ENCODE measurements at regions of chr22 and their contacts with region 1.

Region 1: DNA sequence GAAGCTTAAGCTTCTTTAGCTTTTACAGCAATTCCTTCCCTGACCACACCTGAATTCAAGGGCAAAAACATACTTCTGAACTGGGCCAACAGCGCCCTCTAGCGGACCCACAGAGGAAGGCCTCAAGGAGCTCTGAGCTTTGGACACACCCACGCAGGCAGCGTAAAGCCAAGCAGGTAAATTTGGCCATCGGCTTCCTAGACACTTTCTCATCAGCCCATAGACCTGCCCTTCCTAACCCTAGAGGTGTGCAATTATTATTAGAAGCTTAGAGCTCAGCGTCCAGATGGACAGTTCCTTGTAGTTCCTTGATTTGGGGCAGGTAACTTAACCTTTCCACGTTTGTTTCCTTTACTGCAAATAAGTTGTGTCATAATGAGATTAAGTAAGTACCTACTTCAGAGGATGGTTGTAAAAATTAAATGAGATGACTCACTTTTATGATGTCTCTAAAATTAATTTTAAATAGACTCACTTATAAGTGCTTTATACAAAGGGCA is 25.7 kb upstream of the HMGXB4 start:
- DNase-seq: peak; percentile 85
- ATAC-seq: peak; percentile 95
- H3K4me3 Mint-ChIP-seq: no peak overlapping the region
- H3K27ac Mint-ChIP-seq: no peak overlapping the region
- H3K4me1 Mint-ChIP-seq: peaks cover 31% of the 10 kb centered on the region
- H3K27me3 Mint-ChIP-seq: peaks cover 21% of the 10 kb centered on the region
- CTCF ChIP-seq: peak; percentile 99

Region 2: DNA sequence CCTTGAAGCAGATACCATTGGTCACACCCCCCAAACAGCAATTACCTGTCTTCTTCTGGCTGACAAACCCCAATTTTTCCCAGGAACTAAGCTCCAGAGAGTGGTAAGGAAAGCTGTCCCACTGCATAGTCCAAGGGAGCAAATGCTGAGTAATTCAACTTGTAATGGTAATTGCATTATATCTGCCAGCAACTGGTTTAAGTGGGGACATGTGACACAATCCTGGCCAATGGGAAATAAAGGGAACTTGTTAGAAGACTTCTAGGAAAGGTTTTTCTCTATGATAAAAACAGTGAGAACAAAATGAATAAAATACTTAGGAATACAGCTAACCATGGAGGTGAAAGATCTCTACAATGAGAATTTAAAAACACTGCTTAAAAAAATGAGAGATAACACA is 175.1 kb before region 1 on chr22:
- CTCF ChIA-PET with region 1: interaction called, 12 read pairs
- POLR2A ChIA-PET with region 1: no interaction called
- DNase-seq: no peak
- ATAC-seq: no peak
- H3K4me3 Mint-ChIP-seq: no peak overlapping the region
- H3K27ac Mint-ChIP-seq: no peak overlapping the region
- H3K4me1 Mint-ChIP-seq: no peaks in the 10 kb centered on the region
- H3K27me3 Mint-ChIP-seq: no peaks in the 10 kb centered on the region
- CTCF ChIP-seq: no peak

Region 3: DNA sequence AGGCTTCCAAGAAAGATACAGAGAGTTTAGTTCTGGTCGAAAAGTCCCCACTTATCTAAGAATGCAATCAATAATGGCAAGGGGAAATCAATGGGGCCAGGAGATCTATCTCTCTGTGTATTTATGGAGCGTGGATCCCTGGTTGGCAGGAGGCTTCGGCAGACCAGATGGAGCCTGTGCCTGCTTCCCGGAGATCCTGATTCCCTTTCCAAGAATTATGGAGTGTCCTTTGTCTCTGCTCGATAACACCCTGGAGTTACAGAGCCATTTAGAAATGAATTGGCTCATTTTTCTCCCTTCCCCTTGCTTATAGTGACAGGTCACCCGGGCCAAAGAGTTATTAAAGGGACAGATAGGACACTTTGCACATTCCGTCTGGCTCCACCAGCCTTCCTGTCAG is 73.3 kb before region 1 on chr22:
- CTCF ChIA-PET with region 1: interaction called, 72 read pairs
- POLR2A ChIA-PET with region 1: no interaction called
- DNase-seq: no peak
- ATAC-seq: no peak
- H3K4me3 Mint-ChIP-seq: no peak overlapping the region
- H3K27ac Mint-ChIP-seq: no peak overlapping the region
- H3K4me1 Mint-ChIP-seq: peaks cover 16% of the 10 kb centered on the region
- H3K27me3 Mint-ChIP-seq: peaks cover 11% of the 10 kb centered on the region
- CTCF ChIP-seq: no peak

Region 4: DNA sequence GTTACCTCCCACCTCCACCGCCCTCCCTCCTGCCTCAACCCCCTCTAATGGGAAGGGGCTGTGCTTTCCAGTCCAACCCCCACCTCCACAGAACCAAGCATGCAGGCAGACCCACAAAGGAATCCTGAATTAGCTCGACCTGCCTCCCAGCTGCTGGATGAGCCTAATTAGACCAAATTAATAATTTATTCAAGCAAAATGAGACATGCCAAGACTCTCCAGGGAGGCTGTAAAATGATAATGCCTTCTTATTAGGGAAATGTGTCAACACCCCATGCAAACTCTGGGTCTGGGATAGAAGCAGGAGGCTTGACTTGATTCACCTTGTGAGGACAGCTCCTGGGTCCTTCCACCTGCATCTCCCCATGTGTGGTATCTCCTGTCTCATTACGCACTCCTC is 33.7 kb before region 1 on chr22:
- CTCF ChIA-PET with region 1: interaction called, 25 read pairs
- POLR2A ChIA-PET with region 1: no interaction called
- DNase-seq: no peak
- ATAC-seq: no peak
- H3K4me3 Mint-ChIP-seq: no peak overlapping the region
- H3K27ac Mint-ChIP-seq: no peak overlapping the region
- H3K4me1 Mint-ChIP-seq: peaks cover 5% of the 10 kb centered on the region
- H3K27me3 Mint-ChIP-seq: peaks cover 2% of the 10 kb centered on the region; the same call in 1 of the 2 replicates
- CTCF ChIP-seq: no peak

Region 5: DNA sequence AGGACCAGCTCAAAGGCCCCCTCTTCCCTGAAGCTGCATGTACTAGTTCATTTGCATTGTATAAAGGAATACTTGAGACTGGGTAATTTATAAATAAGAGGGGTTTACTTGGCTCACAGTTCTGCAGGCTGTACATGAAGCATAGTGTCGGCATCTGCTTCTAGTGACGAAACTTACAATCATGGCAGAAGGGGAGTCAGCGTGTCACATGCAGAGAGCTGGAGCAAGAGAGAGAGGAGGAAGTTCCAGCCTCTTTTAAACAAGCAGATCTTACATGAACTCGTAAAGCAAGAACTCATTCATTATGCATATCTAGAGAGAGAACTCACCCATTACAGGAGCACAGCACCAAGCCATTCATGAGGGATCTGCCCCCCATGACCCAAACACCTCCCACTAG is 18.5 kb after region 1 on chr22:
- CTCF ChIA-PET with region 1: interaction called, 11 read pairs
- POLR2A ChIA-PET with region 1: no interaction called
- DNase-seq: no peak
- ATAC-seq: no peak
- H3K4me3 Mint-ChIP-seq: no peak overlapping the region
- H3K27ac Mint-ChIP-seq: no peak overlapping the region
- H3K4me1 Mint-ChIP-seq: no peaks in the 10 kb centered on the region
- H3K27me3 Mint-ChIP-seq: no peaks in the 10 kb centered on the region
- CTCF ChIP-seq: no peak